A673 (cell line): ENCODE measurements at regions of chr6 and their contacts with region 1.

Region 1: GRCh38 chr6:49321561-49322072 is 141.4 kb downstream of the MMUT start:
- DNase-seq: no peak
- H3K4me3 ChIP-seq: no peak overlapping the region
- H3K27ac ChIP-seq: no peak overlapping the region
- H3K4me1 ChIP-seq: peaks cover 3% of the 10 kb centered on the region
- H3K27me3 ChIP-seq: no peaks in the 10 kb centered on the region
- CTCF ChIP-seq: no peak

Region 2: DNA sequence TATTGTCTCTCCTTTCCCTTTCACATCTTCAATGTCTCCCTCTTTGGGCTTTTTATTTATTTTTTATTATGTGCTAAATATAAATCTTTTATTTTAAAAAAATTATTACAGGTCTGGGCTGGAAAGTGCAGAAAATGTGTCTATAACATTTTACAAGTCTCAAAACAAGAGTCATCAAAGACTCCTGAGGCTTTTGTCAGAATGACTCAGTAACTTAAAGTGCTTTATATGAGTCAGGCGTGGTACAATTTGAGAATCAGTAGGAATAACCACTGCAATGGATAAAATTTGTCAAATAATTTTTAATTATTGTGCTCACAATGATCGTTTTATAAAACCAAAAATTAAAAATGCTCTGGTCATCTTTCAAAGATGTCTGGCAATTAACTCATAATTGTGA is 52.4 kb before region 1 on chr6:
- CTCF ChIA-PET with region 1: no interaction called
- POLR2A ChIA-PET with region 1: no interaction called
- intact Hi-C with region 1: no loop called
- DNase-seq: no peak
- H3K4me3 ChIP-seq: no peak overlapping the region
- H3K27ac ChIP-seq: no peak overlapping the region
- H3K4me1 ChIP-seq: no peaks in the 10 kb centered on the region
- H3K27me3 ChIP-seq: no peaks in the 10 kb centered on the region
- CTCF ChIP-seq: no peak

Region 3: GRCh38 chr6:49345034-49345433 is 23.4 kb after region 1 on chr6:
- CTCF ChIA-PET with region 1: no interaction called
- POLR2A ChIA-PET with region 1: interaction called, 11 read pairs
- intact Hi-C with region 1: no loop called
- DNase-seq: no peak
- H3K4me3 ChIP-seq: no peak overlapping the region
- H3K27ac ChIP-seq: no peak overlapping the region
- H3K4me1 ChIP-seq: no peaks in the 10 kb centered on the region
- H3K27me3 ChIP-seq: no peaks in the 10 kb centered on the region
- CTCF ChIP-seq: no peak

Region 4: DNA sequence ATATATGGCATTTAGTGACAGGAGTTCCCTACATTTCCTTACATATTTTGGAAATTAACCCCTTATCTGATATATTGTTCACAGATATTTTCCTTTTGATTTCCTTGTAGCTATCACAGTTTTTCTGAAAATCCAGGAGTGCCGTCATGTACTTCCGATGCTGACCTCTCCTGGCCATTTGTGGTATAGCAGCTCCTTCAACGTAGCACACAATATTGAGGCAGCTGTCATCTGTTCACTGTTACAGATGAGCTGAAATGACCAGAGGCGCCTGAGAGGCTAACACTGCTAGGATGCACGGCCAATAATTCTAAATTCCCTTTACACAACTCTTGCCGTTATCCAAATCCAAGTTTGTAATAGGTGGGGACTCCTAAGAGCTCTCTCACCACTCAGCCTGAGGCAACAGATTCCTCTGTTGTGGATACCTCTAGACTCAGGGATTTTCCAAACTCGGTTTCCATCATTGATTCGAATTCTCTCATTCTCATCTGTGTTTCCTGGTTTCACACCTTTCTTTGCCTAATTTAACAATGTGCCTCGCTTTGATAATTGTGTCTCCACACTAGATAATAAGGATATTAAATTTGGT is 88.4 kb after region 1 on chr6:
- CTCF ChIA-PET with region 1: no interaction called
- POLR2A ChIA-PET with region 1: no interaction called
- intact Hi-C with region 1: no loop called
- DNase-seq: peak; percentile 84
- H3K4me3 ChIP-seq: peak overlapping the region; percentile 14
- H3K27ac ChIP-seq: peak overlapping the region; percentile 57
- H3K4me1 ChIP-seq: peaks cover 6% of the 10 kb centered on the region
- H3K27me3 ChIP-seq: no peaks in the 10 kb centered on the region
- CTCF ChIP-seq: peak; percentile 89